ENCODE measurements at regions of chr7 and their contacts with region 1.

Region 1: DNA sequence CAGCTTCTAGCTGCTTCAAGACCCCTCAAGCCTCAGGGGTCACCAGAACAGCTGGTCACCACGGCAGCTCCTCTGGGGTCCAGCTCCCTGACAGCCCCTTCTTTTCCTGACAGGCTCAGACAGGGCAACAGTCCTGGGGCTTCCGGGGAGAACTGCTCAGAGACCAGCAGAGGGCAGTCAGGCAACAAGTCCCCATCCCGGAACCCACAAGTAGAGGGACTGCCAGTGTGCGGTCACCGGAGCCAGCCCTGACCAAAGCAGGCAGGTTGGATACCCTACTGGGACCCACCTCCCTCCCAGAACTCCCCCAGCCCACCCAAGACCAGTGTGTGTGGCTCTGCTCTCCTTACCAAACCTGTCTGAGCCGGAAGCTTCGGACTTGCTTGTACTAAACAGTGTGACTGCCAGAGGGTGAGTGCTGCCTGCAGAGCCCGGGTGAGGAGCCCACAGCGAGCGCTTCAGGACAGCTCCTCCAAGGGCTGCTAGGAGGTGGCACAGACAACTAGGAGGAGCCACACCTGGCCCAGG is 40.3 kb downstream of the YKT6 start:
- ATAC-seq: peak; percentile 78 to 93 (median 84)
- H3K4me3 ChIP-seq: no peak overlapping the region
- H3K27ac ChIP-seq: no peak overlapping the region
- H3K4me1 ChIP-seq: peaks cover 2% of the 10 kb centered on the region in 2 donors

Region 2: DNA sequence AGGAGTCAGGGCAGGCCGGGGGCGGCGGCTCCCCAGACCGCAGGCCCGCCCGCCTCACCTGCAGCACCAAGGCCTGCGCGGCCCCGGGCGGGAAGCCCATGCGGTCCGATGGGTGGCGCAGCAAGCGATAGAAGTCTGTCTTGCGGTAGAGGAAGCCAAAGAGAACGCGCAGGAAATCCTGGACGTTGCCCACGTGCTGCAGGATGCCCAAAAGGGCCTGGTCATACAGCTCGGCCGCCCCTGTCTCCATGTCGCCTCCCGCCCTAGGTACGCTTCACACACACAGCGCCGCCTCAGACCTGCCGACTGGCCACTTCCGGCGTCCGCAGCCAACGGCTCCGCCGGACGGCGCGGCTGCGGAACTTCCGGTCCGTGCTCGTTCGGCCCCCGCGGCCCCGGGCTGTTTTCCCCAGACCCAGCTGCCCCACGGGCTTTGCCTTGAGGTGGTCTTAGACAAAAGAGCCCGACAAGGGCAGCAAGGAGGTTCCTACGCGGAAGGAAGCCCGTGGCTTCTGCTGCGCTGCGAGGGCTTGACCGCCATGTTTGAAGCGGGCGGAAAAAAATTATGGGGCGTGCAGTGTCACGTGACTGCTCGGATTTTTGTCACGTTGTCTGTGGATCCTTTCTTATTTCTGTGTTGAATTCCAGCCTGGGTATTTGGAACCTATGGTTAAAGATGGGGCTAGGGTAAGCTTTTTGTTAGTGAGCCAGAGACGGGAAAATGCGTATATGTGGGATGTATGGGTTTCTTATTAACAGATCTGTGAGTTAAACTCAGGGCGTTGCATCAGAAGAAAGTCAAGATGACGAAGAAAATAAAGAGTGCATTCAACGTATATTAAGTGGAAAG is 249.5 kb after region 1 on chr7 and contains the start of gene NUDCD3:
- in situ Hi-C with region 1: loop called in 2 of 9 experiments (anchors 25 kb)
- ATAC-seq: peak; percentile 93 to 99 (median 98)
- H3K4me3 ChIP-seq: peak within 1 kb of the TSS; percentile 58 to 97 (median 80)
- H3K27ac ChIP-seq: peak within 1 kb of the TSS; percentile 98 to 100
- H3K4me1 ChIP-seq: peaks cover 10 to 16% of the 10 kb centered on the region in 2 donors
- total RNA-seq, gene NUDCD3: 44.8 to 69.6 (median 52.0) TPM

Region 3: GRCh38 chr7:44573464-44574286 is 332.6 kb after region 1 on chr7 and contains the start of gene DDX56:
- in situ Hi-C with region 1: loop called in 1 of 9 experiments (anchors 25 kb)
- ATAC-seq: peak; percentile 91 to 99 (median 98)
- H3K4me3 ChIP-seq: peak within 1 kb of the TSS; percentile 85 to 95 (median 88)
- H3K27ac ChIP-seq: peak within 1 kb of the TSS; percentile 88 to 92
- H3K4me1 ChIP-seq: peaks cover 5 to 12% of the 10 kb centered on the region in 2 donors
- total RNA-seq, gene DDX56: 28.8 to 97.6 (median 48.1) TPM